CD4-positive, alpha-beta T cell (primary cell): ENCODE measurements at regions of chr16 and their contacts with region 1.

Region 1: GRCh38 chr16:84617791-84618580 is at the start of gene COTL1:
- DNase-seq: peak; percentile 87 to 97 (median 94)
- ATAC-seq: peak; percentile 84
- H3K4me3 ChIP-seq: peak within 1 kb of the TSS; percentile 80
- H3K4me3 Mint-ChIP-seq: peak within 1 kb of the TSS; percentile 89
- H3K27ac ChIP-seq: peak within 1 kb of the TSS; percentile 24 to 57
- H3K27ac Mint-ChIP-seq: peak within 1 kb of the TSS; percentile 82
- H3K4me1 ChIP-seq: peaks cover 47% of the 10 kb centered on the region
- H3K4me1 Mint-ChIP-seq: peaks cover 49% of the 10 kb centered on the region
- H3K27me3 ChIP-seq: no peaks in the 10 kb centered on the region
- H3K27me3 Mint-ChIP-seq: no peaks in the 10 kb centered on the region
- CTCF ChIP-seq: no peak
- total RNA-seq, gene COTL1: 179 to 181 TPM

Region 2: DNA sequence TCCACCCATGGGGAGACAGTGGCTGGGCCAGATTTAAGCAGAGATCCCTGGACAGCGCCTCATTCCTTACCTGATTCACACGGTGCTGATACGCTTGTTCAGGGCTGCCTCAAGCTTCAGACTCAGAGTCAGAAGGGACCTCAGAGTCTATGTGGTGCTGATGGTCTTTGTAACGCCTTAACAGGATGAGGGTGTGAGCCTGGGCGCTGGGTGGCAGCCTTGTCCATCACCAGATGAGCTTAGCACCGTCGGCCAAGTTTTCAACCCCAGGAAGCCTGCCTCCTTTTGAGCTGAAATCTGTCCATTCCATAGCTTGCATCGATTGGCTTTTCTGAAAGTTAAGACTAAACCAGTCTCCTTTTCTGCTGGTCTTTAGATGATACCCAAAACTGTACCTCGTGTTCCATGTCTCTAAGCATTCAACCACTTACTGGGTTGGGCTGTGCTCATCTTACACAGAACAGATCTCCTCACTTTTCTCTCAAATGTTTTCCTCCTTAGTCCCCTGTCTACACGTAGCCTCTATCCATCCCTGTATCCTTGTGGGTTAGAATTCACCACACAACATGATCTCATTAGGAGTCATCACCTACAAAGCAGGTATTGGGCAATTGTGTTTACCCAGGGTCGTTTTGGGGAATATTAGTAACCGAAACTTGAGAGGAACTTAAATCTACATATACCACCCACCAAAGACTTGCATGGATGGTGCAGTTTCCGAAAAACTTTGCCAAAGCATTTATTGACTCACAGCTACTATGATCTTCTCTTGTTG is 1417.8 kb before region 1 on chr16:
- CTCF ChIA-PET with region 1: no interaction called
- POLR2A ChIA-PET with region 1: no interaction called
- intact Hi-C with region 1: no loop called
- DNase-seq: no peak
- ATAC-seq: no peak
- H3K4me3 ChIP-seq: no peak overlapping the region
- H3K4me3 Mint-ChIP-seq: no peak overlapping the region
- H3K27ac ChIP-seq: no peak overlapping the region
- H3K27ac Mint-ChIP-seq: no peak overlapping the region
- H3K4me1 ChIP-seq: no peaks in the 10 kb centered on the region
- H3K4me1 Mint-ChIP-seq: no peaks in the 10 kb centered on the region
- H3K27me3 ChIP-seq: no peaks in the 10 kb centered on the region
- H3K27me3 Mint-ChIP-seq: no peaks in the 10 kb centered on the region
- CTCF ChIP-seq: no peak

Region 3: DNA sequence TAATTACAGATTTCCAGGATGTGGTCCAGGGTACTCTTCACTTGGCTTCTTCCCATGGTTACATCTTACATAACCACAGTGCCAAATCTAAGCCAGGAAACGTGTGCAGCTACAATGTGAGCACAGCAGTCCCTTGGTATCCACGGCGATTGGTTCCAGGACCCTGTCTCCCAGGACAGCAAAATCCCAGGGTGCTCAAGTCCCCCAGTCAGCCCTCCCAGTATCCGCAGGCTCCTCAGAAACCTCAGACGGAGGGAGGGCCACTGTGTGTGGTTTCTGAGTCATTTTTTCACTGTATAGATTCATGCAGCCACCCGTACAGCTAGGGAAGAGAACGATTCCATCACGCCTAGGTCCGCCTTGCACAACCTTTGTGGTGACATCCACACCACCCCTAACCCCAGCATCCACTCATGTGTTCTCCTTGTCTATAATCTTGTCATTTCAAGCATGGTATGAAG is 260.8 kb before region 1 on chr16:
- CTCF ChIA-PET with region 1: no interaction called
- POLR2A ChIA-PET with region 1: no interaction called
- intact Hi-C with region 1: no loop called
- DNase-seq: peak in 2 of 14 experiments; percentile 43 to 52
- ATAC-seq: peak; percentile 21
- H3K4me3 ChIP-seq: no peak overlapping the region
- H3K4me3 Mint-ChIP-seq: no peak overlapping the region
- H3K27ac ChIP-seq: no peak overlapping the region
- H3K27ac Mint-ChIP-seq: no peak overlapping the region
- H3K4me1 ChIP-seq: peaks cover 12% of the 10 kb centered on the region
- H3K4me1 Mint-ChIP-seq: peaks cover 20% of the 10 kb centered on the region
- H3K27me3 ChIP-seq: no peaks in the 10 kb centered on the region
- H3K27me3 Mint-ChIP-seq: peaks cover 5% of the 10 kb centered on the region
- CTCF ChIP-seq: no peak

Region 4: DNA sequence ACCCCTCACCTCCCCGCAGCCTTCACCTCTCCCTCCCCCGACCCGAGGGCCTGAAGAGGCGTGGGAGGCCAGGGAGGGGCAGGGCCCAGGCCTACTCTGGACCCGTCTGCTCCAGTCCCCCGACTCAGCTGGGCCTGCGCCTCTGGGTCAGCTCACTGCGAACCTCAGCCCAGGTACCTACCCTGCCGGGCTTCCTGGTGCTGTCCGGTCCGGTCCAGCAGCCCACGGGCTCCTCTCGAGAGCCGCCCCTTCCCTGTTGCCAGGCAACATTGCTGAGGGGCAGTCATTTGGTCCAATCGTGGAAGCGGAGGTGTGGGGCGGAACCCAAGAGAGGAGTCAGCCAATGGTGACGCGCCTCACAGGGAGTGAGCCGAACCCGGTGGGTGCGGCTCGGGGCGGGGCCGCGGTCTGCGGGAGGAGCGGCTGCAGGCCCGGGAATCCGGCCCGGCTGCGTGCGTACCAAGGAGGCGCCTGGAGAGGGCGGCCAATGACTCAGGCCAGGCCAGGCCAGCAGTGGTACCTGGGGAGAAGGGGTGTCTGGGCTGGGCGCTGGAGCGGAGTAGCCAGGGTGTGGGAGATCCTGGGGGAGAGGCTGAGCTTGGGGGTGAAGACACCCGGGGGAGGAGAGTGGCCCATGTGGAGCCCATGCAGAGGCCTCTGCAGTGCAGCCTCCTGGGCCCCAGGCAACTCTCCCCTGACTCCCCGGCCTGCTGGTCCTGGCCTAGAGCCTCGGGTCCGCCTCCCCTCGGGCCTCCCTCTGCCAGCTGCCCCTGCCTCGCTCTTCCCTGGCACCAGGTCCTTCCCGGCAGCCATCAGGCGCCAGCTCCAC is 113.4 kb before region 1 on chr16 and contains the start of gene MEAK7:
- CTCF ChIA-PET with region 1: interaction called, 16 read pairs
- POLR2A ChIA-PET with region 1: interaction called, 5 read pairs
- intact Hi-C with region 1: no loop called
- DNase-seq: peak; percentile 95 to 98 (median 98)
- ATAC-seq: peak; percentile 95
- H3K4me3 ChIP-seq: peak within 1 kb of the TSS; percentile 85
- H3K4me3 Mint-ChIP-seq: peak within 1 kb of the TSS; percentile 93
- H3K27ac ChIP-seq: peak within 1 kb of the TSS; percentile 34 to 46
- H3K27ac Mint-ChIP-seq: peak within 1 kb of the TSS; percentile 90
- H3K4me1 ChIP-seq: peaks cover 64% of the 10 kb centered on the region
- H3K4me1 Mint-ChIP-seq: peaks cover 62% of the 10 kb centered on the region
- H3K27me3 ChIP-seq: no peaks in the 10 kb centered on the region
- H3K27me3 Mint-ChIP-seq: no peaks in the 10 kb centered on the region
- CTCF ChIP-seq: no peak
- total RNA-seq, gene MEAK7: 1.9 to 3.7 TPM

Region 5: GRCh38 chr16:84555418-84556195 is 62.4 kb before region 1 on chr16:
- CTCF ChIA-PET with region 1: interaction called, 15 read pairs
- POLR2A ChIA-PET with region 1: no interaction called
- intact Hi-C with region 1: no loop called
- DNase-seq: peak in 2 of 14 experiments; percentile 30 to 41
- ATAC-seq: peak; percentile 63
- H3K4me3 ChIP-seq: no peak overlapping the region
- H3K4me3 Mint-ChIP-seq: no peak overlapping the region
- H3K27ac ChIP-seq: no peak overlapping the region
- H3K27ac Mint-ChIP-seq: no peak overlapping the region
- H3K4me1 ChIP-seq: peaks cover 28% of the 10 kb centered on the region
- H3K4me1 Mint-ChIP-seq: peaks cover 7% of the 10 kb centered on the region
- H3K27me3 ChIP-seq: no peaks in the 10 kb centered on the region
- H3K27me3 Mint-ChIP-seq: no peaks in the 10 kb centered on the region
- CTCF ChIP-seq: no peak

Region 6: DNA sequence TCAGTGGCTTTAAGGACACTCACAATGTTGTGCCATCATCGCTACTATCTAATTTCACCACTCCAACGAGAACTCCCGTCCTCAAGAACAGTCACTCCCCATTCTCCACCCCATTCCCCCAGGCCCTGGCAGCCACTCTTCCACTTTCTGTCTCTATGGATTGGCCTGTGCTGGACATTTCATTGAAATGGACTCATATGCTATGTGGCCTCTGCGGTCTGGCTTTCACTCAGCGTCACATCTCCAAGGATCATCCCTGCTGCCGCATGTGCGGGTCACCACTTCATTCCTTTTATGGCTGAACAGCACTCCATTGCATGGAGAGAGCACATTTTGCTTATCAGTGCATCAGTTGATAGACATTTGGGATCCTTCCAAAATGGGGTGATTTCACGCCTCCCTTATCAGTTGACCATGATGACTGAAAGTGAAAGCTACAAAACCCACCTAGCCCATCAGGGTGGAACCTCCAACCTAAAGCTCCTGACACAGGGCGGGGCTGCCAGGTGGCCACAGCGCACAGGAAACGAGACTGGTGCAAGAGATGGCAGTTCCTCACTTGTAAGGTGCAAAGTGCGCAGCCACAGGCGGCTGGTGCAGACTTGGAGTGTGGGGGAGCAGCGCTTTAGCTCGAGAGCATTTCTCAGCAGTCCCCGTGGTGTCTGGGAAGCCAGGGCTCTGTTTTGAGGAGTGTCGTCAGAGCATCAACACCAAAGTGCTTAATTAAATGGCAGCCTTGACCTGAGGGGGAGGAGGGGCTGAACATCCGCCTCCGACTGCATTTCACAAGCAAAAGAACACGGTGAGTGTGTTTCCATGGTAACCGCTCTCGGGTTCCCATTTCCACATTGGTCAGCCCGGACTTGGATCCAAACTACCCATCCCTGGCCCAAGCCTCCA is 23.9 kb before region 1 on chr16:
- CTCF ChIA-PET with region 1: interaction called, 6 read pairs
- POLR2A ChIA-PET with region 1: interaction called, 135 read pairs
- intact Hi-C with region 1: loop called in 1 of 2 experiments (anchors 1 kb)
- DNase-seq: peak; percentile 62 to 93 (median 80)
- ATAC-seq: peak; percentile 90
- H3K4me3 ChIP-seq: peak overlapping the region; percentile 61
- H3K4me3 Mint-ChIP-seq: peak overlapping the region; percentile 86
- H3K27ac ChIP-seq: peak overlapping the region; percentile 81 to 96
- H3K27ac Mint-ChIP-seq: peak overlapping the region; percentile 92
- H3K4me1 ChIP-seq: peaks cover 65% of the 10 kb centered on the region
- H3K4me1 Mint-ChIP-seq: peaks cover 69% of the 10 kb centered on the region
- H3K27me3 ChIP-seq: no peaks in the 10 kb centered on the region
- H3K27me3 Mint-ChIP-seq: no peaks in the 10 kb centered on the region
- CTCF ChIP-seq: no peak

Region 7: GRCh38 chr16:84607694-84608093 is 10.3 kb before region 1 on chr16:
- CTCF ChIA-PET with region 1: interaction called, 19 read pairs
- POLR2A ChIA-PET with region 1: interaction called, 135 read pairs
- intact Hi-C with region 1: loop called in 1 of 2 experiments (anchors 1 kb)
- DNase-seq: peak in 4 of 14 experiments; percentile 53 to 74 (median 70)
- ATAC-seq: peak; percentile 60
- H3K4me3 ChIP-seq: peak overlapping the region; percentile 22
- H3K4me3 Mint-ChIP-seq: peak overlapping the region; percentile 47
- H3K27ac ChIP-seq: peak overlapping the region; percentile 51 to 63
- H3K27ac Mint-ChIP-seq: peak overlapping the region; percentile 88
- H3K4me1 ChIP-seq: peaks cover 97% of the 10 kb centered on the region
- H3K4me1 Mint-ChIP-seq: peaks cover 90% of the 10 kb centered on the region
- H3K27me3 ChIP-seq: no peaks in the 10 kb centered on the region
- H3K27me3 Mint-ChIP-seq: no peaks in the 10 kb centered on the region
- CTCF ChIP-seq: no peak

Region 8: GRCh38 chr16:84726079-84726668 is 108.2 kb after region 1 on chr16:
- CTCF ChIA-PET with region 1: interaction called, 10 read pairs
- POLR2A ChIA-PET with region 1: interaction called, 8 read pairs
- intact Hi-C with region 1: loop called (anchors 1 kb)
- DNase-seq: peak; percentile 76 to 93 (median 84)
- ATAC-seq: peak; percentile 76
- H3K4me3 ChIP-seq: no peak overlapping the region
- H3K4me3 Mint-ChIP-seq: peak overlapping the region; percentile 39
- H3K27ac ChIP-seq: no peak overlapping the region
- H3K27ac Mint-ChIP-seq: no peak overlapping the region
- H3K4me1 ChIP-seq: peaks cover 17% of the 10 kb centered on the region
- H3K4me1 Mint-ChIP-seq: peaks cover 81% of the 10 kb centered on the region
- H3K27me3 ChIP-seq: no peaks in the 10 kb centered on the region
- H3K27me3 Mint-ChIP-seq: no peaks in the 10 kb centered on the region
- CTCF ChIP-seq: peak; percentile 99

Region 9: DNA sequence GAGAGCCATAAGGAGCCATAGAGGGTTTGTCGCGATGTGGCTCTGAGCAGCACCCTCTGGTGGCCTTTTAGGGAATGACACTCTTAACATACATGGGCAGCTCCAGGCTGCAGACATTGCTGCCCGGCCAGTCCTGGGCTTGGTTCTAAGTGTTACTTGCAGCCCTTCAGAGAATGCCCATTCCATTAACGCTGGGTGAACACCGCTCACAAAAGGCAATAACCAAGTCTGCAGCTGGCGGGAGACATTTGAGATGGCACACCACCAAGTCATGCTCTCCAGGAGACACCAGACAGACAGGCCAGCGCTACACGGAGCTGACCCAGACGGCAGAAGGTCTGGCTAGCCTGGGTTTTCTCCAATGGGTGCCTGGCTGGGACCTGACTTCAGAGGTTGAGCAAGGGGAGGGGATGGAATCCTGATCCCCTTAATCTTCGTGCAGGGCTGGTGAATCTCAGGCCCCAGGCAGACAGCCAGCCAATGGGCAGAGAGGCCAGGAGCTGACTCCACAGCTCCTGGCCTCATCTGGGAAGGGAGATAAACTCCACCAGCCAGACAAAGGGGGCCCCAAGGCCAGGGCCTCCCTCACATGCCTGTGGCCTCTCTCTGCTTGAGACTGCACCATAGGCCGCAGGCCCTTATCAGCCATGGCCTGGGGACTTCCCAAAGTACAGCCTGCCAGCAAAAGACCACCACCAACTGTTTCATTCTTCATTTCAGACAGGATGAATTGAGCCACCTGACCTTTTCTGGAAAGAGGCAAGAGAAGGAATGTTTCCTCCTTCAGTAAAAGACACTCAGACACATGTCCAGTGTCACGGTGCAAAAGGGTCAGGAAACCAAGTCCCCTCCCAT is 334.6 kb after region 1 on chr16:
- CTCF ChIA-PET with region 1: interaction called, 3 read pairs
- POLR2A ChIA-PET with region 1: no interaction called
- intact Hi-C with region 1: loop called in 1 of 2 experiments (anchors 2 kb)
- DNase-seq: peak; percentile 51 to 88 (median 62)
- ATAC-seq: peak; percentile 87
- H3K4me3 ChIP-seq: no peak overlapping the region
- H3K4me3 Mint-ChIP-seq: no peak overlapping the region
- H3K27ac ChIP-seq: no peak overlapping the region
- H3K27ac Mint-ChIP-seq: no peak overlapping the region
- H3K4me1 ChIP-seq: peaks cover 23% of the 10 kb centered on the region
- H3K4me1 Mint-ChIP-seq: peaks cover 11% of the 10 kb centered on the region
- H3K27me3 ChIP-seq: peaks cover 0 to 5% of the 10 kb centered on the region in 2 experiments
- H3K27me3 Mint-ChIP-seq: no peaks in the 10 kb centered on the region
- CTCF ChIP-seq: peak; percentile 88